H1 (cell line): ENCODE measurements at regions of chr5 and their contacts with region 1.

Region 1: DNA sequence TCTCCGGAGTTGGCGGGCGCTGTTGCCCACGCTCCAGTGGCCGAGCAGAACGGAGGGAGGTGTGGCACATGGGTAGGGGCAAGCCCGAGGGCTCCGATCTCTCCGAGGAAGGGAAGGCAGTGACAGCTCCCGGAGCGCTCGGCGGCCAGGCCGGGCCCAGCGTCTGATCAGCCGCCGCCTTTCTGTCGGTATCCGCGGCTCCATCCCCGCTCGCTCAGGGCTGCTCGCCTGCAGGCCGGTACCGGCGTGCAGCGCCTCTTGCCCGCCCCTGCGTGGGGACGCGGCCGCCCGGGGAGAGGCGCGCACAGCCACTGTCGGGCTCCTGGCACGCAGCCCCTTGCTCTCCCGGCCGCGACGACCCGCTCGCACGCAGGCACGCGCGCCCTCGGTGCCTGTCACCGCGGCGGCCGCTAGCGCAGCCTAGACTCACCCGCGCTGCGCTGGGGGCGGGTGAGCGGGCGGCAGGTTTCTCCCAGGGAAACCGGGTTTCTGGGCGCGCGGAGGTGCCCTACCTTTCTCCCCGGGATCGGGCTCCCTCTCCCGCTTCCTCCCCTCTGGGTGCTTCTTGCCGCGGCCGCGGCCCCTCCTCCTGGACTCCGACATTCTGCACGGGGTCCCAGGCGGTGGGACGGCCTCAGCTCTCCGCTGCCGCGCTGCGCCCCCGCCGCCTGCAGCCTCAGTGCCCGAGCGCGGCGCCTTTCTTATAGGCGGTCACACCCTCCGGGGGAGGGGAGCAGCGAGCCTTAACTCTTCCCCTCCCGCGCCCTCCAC is 108.4 kb downstream of the PSD2 start:
- DNase-seq: peak in 1 of 2 experiments; percentile 78
- H3K4me3 ChIP-seq: peak overlapping the region; percentile 37 to 81 (median 59)
- H3K27ac ChIP-seq: no peak overlapping the region
- H3K4me1 ChIP-seq: peaks cover 0 to 23% (median 10%) of the 10 kb centered on the region in 4 experiments; a peak in 6 of 7 replicates
- H3K27me3 ChIP-seq: peaks cover 35 to 77% (median 59%) of the 10 kb centered on the region in 4 experiments
- CTCF ChIP-seq: no peak
- EP300 ChIP-seq: no peak
- POLR2A ChIP-seq: no peak
- RAD21 ChIP-seq: no peak

Region 2: GRCh38 chr5:139888370-139888769 is 15.6 kb before region 1 on chr5:
- CTCF ChIA-PET with region 1: interaction called, 11 read pairs
- POLR2A ChIA-PET with region 1: no interaction called
- DNase-seq: no peak
- H3K4me3 ChIP-seq: no peak overlapping the region
- H3K27ac ChIP-seq: no peak overlapping the region
- H3K4me1 ChIP-seq: 0 out of 7 replicates have a peak, but pooled peaks cover 0 to under 1% (median 0%) of the 10 kb centered on the region in 4 experiments
- H3K27me3 ChIP-seq: peaks cover 0 to 2% (median under 1%) of the 10 kb centered on the region in 4 experiments; a peak in 4 of 7 replicates
- CTCF ChIP-seq: no peak
- EP300 ChIP-seq: no peak
- POLR2A ChIP-seq: no peak
- RAD21 ChIP-seq: no peak

Region 3: DNA sequence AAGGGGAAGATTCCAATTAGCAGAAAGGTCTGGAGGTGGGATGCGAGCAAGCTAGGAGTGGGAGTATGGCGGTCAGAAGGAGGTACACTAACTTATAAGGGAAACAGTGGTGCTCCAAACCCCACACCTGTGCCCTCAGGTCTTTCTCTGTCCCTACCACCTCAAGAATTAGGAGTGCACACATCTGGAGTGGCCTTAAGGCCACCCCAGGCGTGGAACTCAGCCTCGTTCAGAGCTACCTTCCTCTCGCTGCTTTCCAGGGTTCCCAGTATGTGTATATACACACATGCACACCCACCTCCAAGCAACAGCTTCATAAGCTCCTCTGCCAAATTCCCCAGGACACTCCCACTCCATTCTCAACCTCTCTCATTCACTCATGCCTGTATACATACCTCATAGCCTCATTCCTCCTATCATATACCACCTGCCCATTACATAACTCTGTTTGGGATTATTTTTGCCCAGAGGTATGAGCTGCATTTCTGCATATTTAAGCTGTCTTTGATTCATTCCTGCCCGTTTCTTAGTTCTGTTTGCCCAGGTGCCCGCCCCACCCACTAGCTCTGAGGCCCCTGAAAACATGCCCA is 10.3 kb after region 1 on chr5:
- CTCF ChIA-PET with region 1: interaction called, 12 read pairs
- POLR2A ChIA-PET with region 1: interaction called, 4 read pairs
- DNase-seq: peak in 1 of 2 experiments; percentile 32
- H3K4me3 ChIP-seq: no peak overlapping the region
- H3K27ac ChIP-seq: no peak overlapping the region
- H3K4me1 ChIP-seq: peaks cover 2 to 7% (median 5%) of the 10 kb centered on the region in 4 experiments; a peak in 2 of 7 replicates
- H3K27me3 ChIP-seq: no peaks in the 10 kb centered on the region
- CTCF ChIP-seq: no peak
- EP300 ChIP-seq: no peak
- POLR2A ChIP-seq: no peak
- RAD21 ChIP-seq: no peak

Region 4: GRCh38 chr5:140020601-140021177 is 116.7 kb after region 1 on chr5:
- CTCF ChIA-PET with region 1: no interaction called
- POLR2A ChIA-PET with region 1: no interaction called
- DNase-seq: no peak
- H3K4me3 ChIP-seq: no peak overlapping the region
- H3K27ac ChIP-seq: no peak overlapping the region
- H3K4me1 ChIP-seq: no peaks in the 10 kb centered on the region
- H3K27me3 ChIP-seq: peaks cover 0 to 2% (median 0%) of the 10 kb centered on the region in 4 experiments; a peak in 2 of 7 replicates
- CTCF ChIP-seq: no peak
- EP300 ChIP-seq: no peak
- POLR2A ChIP-seq: no peak
- RAD21 ChIP-seq: no peak